Mammary epithelial cell (primary cell): ENCODE measurements at regions of chr12 and their contacts with region 1.

Region 1: GRCh38 chr12:131573631-131574394 is 137.1 kb upstream of the SFSWAP start:
- DNase-seq: no peak
- H3K4me3 ChIP-seq: no peak overlapping the region
- H3K27ac ChIP-seq: no peak overlapping the region
- H3K4me1 ChIP-seq: no peaks in the 10 kb centered on the region
- H3K27me3 ChIP-seq: no peaks in the 10 kb centered on the region
- CTCF ChIP-seq: no peak

Region 2: DNA sequence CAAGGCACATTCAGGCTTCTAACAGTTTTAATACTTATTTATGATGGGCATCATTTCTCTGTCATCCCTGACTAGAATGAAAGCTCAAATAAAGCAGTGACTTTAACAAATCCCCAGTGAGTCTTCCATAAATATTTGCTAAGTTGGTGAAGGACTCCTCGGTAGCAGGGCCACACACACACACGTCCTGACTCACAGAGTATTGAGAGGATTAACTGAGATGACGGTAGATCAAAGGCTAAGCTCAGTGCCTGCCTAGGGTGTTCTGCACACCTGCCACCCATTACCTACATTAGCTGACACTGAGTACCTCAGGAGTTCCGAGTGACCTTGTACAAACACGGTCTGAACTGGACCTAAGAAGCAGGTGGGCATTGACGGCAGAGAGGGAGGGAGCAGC is 60.2 kb before region 1 on chr12:
- CTCF ChIA-PET with region 1: no interaction called
- dilution Hi-C with region 1: no loop called
- in situ Hi-C with region 1: no loop called
- intact Hi-C with region 1: no loop called
- DNase-seq: no peak
- H3K4me3 ChIP-seq: no peak overlapping the region
- H3K27ac ChIP-seq: no peak overlapping the region
- H3K4me1 ChIP-seq: no peaks in the 10 kb centered on the region
- H3K27me3 ChIP-seq: no peaks in the 10 kb centered on the region
- CTCF ChIP-seq: no peak

Region 3: GRCh38 chr12:131530422-131530821 is 43.4 kb before region 1 on chr12:
- CTCF ChIA-PET with region 1: no interaction called
- dilution Hi-C with region 1: loop called (anchors 5 kb)
- in situ Hi-C with region 1: no loop called
- intact Hi-C with region 1: no loop called
- DNase-seq: no peak
- H3K4me3 ChIP-seq: no peak overlapping the region
- H3K27ac ChIP-seq: no peak overlapping the region
- H3K4me1 ChIP-seq: no peaks in the 10 kb centered on the region
- H3K27me3 ChIP-seq: no peaks in the 10 kb centered on the region
- CTCF ChIP-seq: no peak